ENCODE measurements at regions of chr15 and their contacts with region 1.

Region 1: GRCh38 chr15:91867581-91868026 is 14.1 kb downstream of the SLCO3A1 start:
- DNase-seq: peak in 2 of 4 donors; percentile 90 to 92
- ATAC-seq: peak; percentile 88
- H3K4me3 ChIP-seq: no peak overlapping the region
- H3K27ac ChIP-seq: peak overlapping the region; percentile 72 to 83
- H3K4me1 ChIP-seq: peaks cover 32 to 78% of the 10 kb centered on the region in 2 donors
- H3K27me3 ChIP-seq: no peaks in the 10 kb centered on the region
- CTCF ChIP-seq: no peak

Region 2: DNA sequence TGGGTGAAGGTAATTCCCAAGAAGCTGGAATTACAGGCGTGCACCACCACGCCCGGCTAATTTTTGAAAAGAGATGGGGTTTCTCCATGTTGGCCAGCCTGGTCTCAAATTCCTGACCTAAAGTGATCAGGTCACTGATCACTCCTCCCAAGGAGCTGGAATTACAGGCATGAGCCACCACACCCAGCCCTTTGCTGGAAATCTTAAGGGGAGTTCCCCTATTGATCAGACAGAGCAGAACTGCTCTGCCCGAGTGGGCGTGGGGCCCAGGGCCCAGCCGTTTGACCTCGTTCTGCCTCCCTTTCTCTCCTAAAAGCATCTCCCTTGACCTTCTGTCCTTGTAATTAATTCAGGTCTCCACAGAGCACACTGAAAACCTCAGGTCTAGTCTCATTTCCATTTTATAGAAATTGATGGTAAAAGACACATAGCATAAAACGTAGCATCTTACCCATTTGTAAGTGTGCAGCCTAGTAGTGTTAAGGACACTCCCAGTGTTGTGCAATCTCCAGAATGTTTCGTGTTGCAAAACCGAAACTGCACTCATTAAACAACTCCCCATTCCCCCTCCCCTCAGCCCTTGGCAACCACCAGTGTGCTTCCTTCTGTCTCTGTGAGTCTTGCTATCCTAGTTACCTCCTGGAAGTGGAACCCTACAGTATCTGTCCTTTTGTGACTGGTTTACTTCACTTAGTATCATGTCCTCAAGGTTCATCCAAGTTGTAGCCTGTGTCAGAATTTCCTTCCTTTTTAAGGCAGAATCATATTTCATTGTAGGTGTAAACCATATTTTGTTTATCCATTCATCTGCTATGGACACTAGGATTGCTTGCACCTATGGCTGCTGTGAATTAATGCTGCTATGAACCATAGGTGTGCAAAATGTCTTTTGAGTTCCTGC is 75.3 kb after region 1 on chr15:
- intact Hi-C with region 1: loop called in 1 of 2 experiments (anchors 10 kb)
- DNase-seq: peak; percentile 82 to 96 (median 89)
- ATAC-seq: peak; percentile 70
- H3K4me3 ChIP-seq: peak overlapping the region in 1 of 2 donors; percentile 6
- H3K27ac ChIP-seq: peak overlapping the region; percentile 90 to 93
- H3K4me1 ChIP-seq: peaks cover 66 to 97% of the 10 kb centered on the region in 2 donors
- H3K27me3 ChIP-seq: no peaks in the 10 kb centered on the region
- CTCF ChIP-seq: no peak